B cell (primary cell): ENCODE measurements at regions of chr18 and their contacts with region 1.

Region 1: DNA sequence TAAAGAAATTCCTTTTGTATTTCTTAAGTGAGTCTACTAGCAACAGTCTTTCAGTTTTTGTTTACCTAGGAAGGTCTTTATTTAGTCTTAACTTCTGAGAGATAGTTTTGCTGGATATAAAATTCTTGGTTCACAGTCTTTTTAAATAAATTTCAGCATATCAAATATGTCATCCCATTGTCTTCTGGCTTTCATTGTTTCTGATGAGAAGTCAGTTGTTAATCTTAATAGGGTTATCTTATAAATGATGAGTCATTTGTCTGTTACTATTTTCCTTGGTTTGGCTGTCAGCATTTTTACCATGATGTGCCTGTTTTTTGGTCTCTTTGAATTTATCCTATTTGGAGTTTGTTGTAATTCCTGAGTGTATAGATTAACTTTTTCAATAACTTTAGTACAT is 129.3 kb downstream of the FAM210A start:
- DNase-seq: peak; percentile 39
- ATAC-seq: no peak
- H3K4me3 ChIP-seq: no peak overlapping the region
- H3K4me3 Mint-ChIP-seq: no peak overlapping the region
- H3K27ac ChIP-seq: no peak overlapping the region
- H3K27ac Mint-ChIP-seq: no peak overlapping the region
- H3K4me1 ChIP-seq: peaks cover 0 to 3% of the 10 kb centered on the region in 2 donors
- H3K4me1 Mint-ChIP-seq: peaks cover 14% of the 10 kb centered on the region
- H3K27me3 ChIP-seq: no peaks in the 10 kb centered on the region
- H3K27me3 Mint-ChIP-seq: no peaks in the 10 kb centered on the region
- CTCF ChIP-seq: no peak

Region 2: DNA sequence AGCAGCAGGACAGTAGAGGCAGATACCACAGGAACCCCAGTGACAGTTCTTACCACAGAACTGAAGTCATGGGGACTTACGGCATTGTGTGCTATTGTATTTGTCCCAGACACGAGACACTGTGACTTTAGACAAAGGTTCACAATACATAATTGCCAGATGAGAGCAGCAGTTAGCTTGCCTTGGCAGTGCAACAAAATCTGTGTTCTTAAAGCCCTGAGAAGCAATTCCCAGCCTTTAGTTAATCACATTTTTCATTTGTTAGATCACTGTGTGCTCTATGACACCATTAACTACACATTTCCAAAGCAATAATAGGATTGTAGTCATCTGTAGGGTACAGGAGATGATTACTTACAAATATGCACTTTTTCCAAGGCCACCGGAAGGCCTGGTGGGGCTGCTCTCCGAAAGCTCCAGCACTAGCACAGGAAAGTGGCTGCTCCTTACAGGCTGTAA is 476.1 kb before region 1 on chr18:
- CTCF ChIA-PET with region 1: no interaction called
- POLR2A ChIA-PET with region 1: no interaction called
- intact Hi-C with region 1: no loop called
- DNase-seq: no peak
- ATAC-seq: no peak
- H3K4me3 ChIP-seq: no peak overlapping the region
- H3K4me3 Mint-ChIP-seq: no peak overlapping the region
- H3K27ac ChIP-seq: no peak overlapping the region
- H3K27ac Mint-ChIP-seq: no peak overlapping the region
- H3K4me1 ChIP-seq: peaks cover 0 to 4% of the 10 kb centered on the region in 2 donors
- H3K4me1 Mint-ChIP-seq: peaks cover 7% of the 10 kb centered on the region
- H3K27me3 ChIP-seq: no peaks in the 10 kb centered on the region
- H3K27me3 Mint-ChIP-seq: no peaks in the 10 kb centered on the region
- CTCF ChIP-seq: no peak

Region 3: DNA sequence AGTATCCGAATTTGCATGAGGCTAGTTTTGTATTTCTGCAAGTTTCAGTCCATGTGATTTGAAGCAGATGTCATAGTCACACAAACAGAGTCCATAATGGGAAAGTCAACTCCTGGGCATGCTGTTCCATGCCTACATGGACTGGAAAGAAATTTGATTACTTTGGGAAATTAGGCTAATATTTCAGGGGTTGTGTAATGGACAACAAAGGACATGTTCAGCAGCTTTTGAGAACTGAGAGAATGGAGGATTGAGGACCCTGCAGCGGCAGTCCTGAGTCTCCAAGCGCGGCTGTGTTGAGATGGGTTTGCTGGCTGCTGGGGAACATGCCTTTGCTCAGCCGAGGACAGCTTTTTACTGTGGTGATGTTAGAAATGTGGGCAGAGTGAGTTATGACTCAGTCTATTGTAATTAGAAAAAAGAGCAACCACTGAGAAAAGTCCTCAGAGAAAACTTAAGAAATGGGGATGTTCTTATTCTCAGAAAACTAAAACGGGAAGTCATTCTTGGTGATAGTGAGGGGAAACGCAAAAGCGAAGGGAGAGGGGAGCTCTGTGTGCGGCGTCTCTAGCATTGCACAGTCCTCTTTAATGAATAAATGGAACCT is 19.9 kb before region 1 on chr18:
- CTCF ChIA-PET with region 1: interaction called, 4 read pairs
- POLR2A ChIA-PET with region 1: interaction called, 3 read pairs
- intact Hi-C with region 1: loop called (anchors 2 kb)
- DNase-seq: peak; percentile 73
- ATAC-seq: peak; percentile 87
- H3K4me3 ChIP-seq: peak overlapping the region in 4 of 5 experiments; percentile 28 to 66 (median 47)
- H3K4me3 Mint-ChIP-seq: peak overlapping the region; percentile 73
- H3K27ac ChIP-seq: peak overlapping the region; percentile 51 to 58
- H3K27ac Mint-ChIP-seq: peak overlapping the region; percentile 76
- H3K4me1 ChIP-seq: peaks cover 29 to 39% of the 10 kb centered on the region in 2 donors
- H3K4me1 Mint-ChIP-seq: peaks cover 45% of the 10 kb centered on the region
- H3K27me3 ChIP-seq: no peaks in the 10 kb centered on the region
- H3K27me3 Mint-ChIP-seq: no peaks in the 10 kb centered on the region
- CTCF ChIP-seq: no peak

Region 4: GRCh38 chr18:13585379-13586153 is 11.5 kb before region 1 on chr18:
- CTCF ChIA-PET with region 1: interaction called, 11 read pairs
- POLR2A ChIA-PET with region 1: interaction called, 5 read pairs
- intact Hi-C with region 1: no loop called
- DNase-seq: peak; percentile 77
- ATAC-seq: peak; percentile 78
- H3K4me3 ChIP-seq: peak overlapping the region in 1 of 5 experiments; percentile 21
- H3K4me3 Mint-ChIP-seq: peak overlapping the region; percentile 74
- H3K27ac ChIP-seq: peak overlapping the region; percentile 50 to 76
- H3K27ac Mint-ChIP-seq: peak overlapping the region; percentile 83
- H3K4me1 ChIP-seq: peaks cover 31 to 34% of the 10 kb centered on the region in 2 donors
- H3K4me1 Mint-ChIP-seq: peaks cover 50% of the 10 kb centered on the region
- H3K27me3 ChIP-seq: no peaks in the 10 kb centered on the region
- H3K27me3 Mint-ChIP-seq: no peaks in the 10 kb centered on the region
- CTCF ChIP-seq: no peak

Region 5: GRCh38 chr18:13775058-13775457 is 178.0 kb after region 1 on chr18:
- CTCF ChIA-PET with region 1: no interaction called
- POLR2A ChIA-PET with region 1: no interaction called
- intact Hi-C with region 1: no loop called
- DNase-seq: no peak
- ATAC-seq: no peak
- H3K4me3 ChIP-seq: no peak overlapping the region
- H3K4me3 Mint-ChIP-seq: no peak overlapping the region
- H3K27ac ChIP-seq: no peak overlapping the region
- H3K27ac Mint-ChIP-seq: no peak overlapping the region
- H3K4me1 ChIP-seq: no peaks in the 10 kb centered on the region
- H3K4me1 Mint-ChIP-seq: no peaks in the 10 kb centered on the region
- H3K27me3 ChIP-seq: peaks cover 0 to 3% (median 0%) of the 10 kb centered on the region in 4 experiments
- H3K27me3 Mint-ChIP-seq: peaks cover 13% of the 10 kb centered on the region
- CTCF ChIP-seq: no peak